Activated CD4-positive, alpha-beta T cell treated with anti-CD3 and anti-CD28 coated beads for 36 hours (primary cell): ENCODE measurements at regions of chr3 and their contacts with region 1.

Region 1: DNA sequence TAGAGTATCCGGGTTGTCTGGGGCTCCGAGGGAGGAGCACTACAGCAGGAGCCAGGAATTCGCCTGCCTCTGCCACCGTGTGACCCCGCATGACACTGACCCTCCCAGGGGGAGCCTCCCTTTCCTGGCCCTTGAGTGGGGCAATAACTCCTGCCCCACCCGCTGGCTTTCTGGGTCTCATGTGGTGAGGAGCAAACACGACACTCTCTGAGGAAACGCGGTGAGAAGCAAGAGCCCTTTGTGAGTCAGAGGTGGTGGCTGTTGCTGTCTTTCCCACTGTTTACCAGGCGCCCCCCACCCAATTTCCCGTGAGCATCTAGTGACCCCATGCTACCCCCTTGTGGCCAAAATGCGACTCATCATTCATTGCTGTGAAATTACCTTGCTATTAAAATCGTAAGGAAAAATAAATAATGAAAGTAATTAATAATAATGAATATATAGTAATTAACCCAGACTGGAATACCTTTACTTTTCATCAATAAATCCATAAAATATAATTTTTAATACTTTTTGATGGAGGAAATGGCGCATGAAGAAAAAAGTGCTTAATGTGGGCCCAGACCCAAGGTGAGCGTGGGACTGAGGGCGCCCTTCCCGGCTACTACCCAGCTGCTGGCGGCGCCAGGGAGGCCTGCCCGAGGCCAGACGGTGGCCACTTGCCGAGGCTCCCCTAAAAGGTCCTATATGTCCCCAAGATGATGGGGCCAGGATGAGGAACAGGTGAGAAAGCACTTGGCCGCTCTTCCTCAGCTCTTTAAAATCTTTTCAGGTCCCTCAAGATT is 29.3 kb downstream of the CCNL1 start:
- DNase-seq: peak; percentile 86
- ATAC-seq: peak; percentile 19
- H3K4me3 Mint-ChIP-seq: peak overlapping the region; percentile 57
- H3K27ac Mint-ChIP-seq: peak overlapping the region; percentile 95
- H3K4me1 Mint-ChIP-seq: peaks cover 76% of the 10 kb centered on the region
- H3K27me3 Mint-ChIP-seq: no peaks in the 10 kb centered on the region

Region 2: GRCh38 chr3:156535162-156535627 is 595.5 kb before region 1 on chr3:
- CTCF ChIA-PET with region 1: no interaction called
- POLR2A ChIA-PET with region 1: no interaction called
- intact Hi-C with region 1: no loop called
- DNase-seq: peak; percentile 58
- ATAC-seq: peak; percentile 85
- H3K4me3 Mint-ChIP-seq: no peak overlapping the region
- H3K27ac Mint-ChIP-seq: no peak overlapping the region
- H3K4me1 Mint-ChIP-seq: peaks cover 7% of the 10 kb centered on the region
- H3K27me3 Mint-ChIP-seq: no peaks in the 10 kb centered on the region

Region 3: DNA sequence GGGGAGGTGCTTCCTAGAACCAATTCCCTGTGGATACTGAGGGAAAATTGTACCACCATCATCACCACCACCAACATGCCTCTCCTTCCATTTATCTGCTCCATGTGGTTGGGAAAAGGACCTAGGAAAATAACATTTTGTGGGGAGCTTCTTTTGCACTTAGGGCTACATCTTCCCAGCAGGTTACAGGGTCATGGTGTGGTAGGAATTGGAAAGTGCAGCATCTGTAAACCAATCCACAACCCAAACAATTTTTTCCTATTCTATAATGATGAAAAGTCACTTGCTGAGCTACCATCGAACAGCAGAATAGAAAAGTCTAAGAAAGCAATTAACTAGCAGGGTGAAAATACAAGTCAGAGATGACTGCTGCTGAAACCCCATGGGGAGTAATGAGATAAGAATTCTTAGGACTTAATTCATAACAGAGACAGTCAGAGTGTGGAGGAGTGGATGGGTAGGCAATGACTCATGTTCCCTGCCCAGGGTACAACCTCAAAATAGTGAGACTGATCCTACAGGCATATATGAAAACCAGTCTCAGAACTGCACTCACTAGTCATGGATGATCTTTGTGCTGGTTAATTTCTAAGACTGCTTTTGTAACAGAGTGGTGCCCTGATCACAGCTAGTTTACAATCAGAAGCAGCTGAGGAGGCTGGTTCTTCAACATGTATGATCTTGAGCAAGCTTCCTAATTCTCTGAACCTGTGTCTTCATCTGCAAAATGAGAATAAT is 342.6 kb before region 1 on chr3:
- CTCF ChIA-PET with region 1: no interaction called
- POLR2A ChIA-PET with region 1: interaction called, 4 read pairs
- intact Hi-C with region 1: loop called in 1 of 2 experiments (anchors 1 kb)
- DNase-seq: peak; percentile 55
- ATAC-seq: peak; percentile 98
- H3K4me3 Mint-ChIP-seq: no peak overlapping the region
- H3K27ac Mint-ChIP-seq: peak overlapping the region; percentile 29
- H3K4me1 Mint-ChIP-seq: peaks cover 26% of the 10 kb centered on the region
- H3K27me3 Mint-ChIP-seq: no peaks in the 10 kb centered on the region

Region 4: GRCh38 chr3:156978481-156978961 is 152.1 kb before region 1 on chr3:
- CTCF ChIA-PET with region 1: interaction called, 3 read pairs
- POLR2A ChIA-PET with region 1: no interaction called
- intact Hi-C with region 1: loop called in 1 of 2 experiments (anchors 5 kb)
- DNase-seq: no peak
- ATAC-seq: no peak
- H3K4me3 Mint-ChIP-seq: no peak overlapping the region
- H3K27ac Mint-ChIP-seq: no peak overlapping the region
- H3K4me1 Mint-ChIP-seq: no peaks in the 10 kb centered on the region
- H3K27me3 Mint-ChIP-seq: no peaks in the 10 kb centered on the region

Region 5: DNA sequence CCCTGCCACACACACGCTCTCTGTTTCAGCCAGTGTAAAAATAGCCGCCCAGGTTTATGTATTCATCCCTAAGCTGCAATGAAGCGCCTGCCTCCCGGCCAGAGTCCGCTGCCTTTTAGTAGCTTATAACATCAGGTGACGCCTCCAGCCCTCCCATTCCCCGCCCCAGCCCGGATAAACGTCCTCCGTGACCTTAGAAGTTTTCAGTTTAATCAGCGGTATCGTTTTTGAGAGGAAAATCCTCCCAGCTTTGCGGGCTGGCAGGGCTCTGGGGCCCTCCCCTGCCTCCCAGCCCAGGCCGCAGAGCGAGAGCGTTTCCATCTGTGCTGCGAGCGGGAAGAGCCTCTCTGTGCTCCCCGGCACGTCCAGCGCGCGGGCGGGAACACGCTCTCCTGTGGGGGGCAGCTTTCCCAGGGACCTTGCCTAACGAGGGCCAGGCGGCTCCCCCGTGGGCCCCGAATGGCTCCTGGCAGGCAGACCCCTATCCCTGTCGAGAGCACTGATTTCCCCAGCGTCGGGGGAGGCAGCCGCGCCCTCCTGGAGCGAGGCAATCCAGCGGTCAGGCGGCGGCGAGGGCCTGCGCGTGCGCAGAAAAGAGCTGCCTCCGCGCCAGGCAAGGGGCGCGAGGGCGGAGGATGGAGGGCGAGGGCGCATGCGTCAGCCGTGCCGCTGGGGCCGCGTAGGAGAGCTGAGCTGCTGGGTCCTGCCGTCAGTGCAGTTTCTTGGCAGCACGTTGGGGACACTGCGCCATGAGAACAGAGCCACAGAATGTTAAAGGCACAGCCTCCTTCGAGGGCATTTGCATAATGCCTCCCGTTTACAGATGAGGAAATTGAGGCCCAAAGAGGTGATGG is 41.8 kb before region 1 on chr3:
- CTCF ChIA-PET with region 1: interaction called, 93 read pairs
- POLR2A ChIA-PET with region 1: interaction called, 35 read pairs
- intact Hi-C with region 1: loop called (anchors 1 kb)
- DNase-seq: peak; percentile 97
- ATAC-seq: peak; percentile 79
- H3K4me3 Mint-ChIP-seq: peak overlapping the region; percentile 72
- H3K27ac Mint-ChIP-seq: peak overlapping the region; percentile 97
- H3K4me1 Mint-ChIP-seq: peaks cover 71% of the 10 kb centered on the region
- H3K27me3 Mint-ChIP-seq: peaks cover 1% of the 10 kb centered on the region

Region 6: DNA sequence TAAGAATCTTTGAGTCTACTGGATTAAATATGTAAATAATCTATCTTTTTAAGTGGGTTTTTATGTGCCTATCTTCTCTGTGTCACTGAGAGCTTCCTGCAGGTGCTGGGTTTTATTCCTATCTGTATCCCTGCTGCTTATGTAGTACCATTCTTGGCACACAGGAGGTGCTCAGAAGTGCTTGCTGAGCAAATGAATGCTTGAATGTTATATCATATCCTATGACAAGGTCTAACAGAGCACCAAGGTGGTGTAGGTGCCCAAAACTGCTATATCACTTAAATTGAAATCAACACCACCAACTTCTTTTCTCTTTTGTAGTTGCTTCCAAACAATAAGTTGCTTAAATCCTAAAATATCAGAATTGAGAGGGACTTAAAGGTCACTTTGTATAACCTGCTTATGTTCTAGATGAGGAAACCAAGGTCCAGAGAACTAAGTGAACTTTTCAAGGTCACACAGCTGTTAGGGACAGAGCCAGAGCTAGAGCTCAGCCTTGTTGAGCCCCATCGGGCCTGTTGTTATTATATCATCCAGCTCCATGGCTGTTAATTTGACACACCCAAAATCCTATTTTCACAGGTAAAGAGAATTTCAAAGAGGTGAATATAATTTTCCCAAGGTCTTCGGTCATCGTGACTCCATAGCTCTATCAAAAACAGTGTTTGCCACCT is 16.7 kb before region 1 on chr3:
- CTCF ChIA-PET with region 1: interaction called, 25 read pairs
- POLR2A ChIA-PET with region 1: no interaction called
- intact Hi-C with region 1: no loop called
- DNase-seq: no peak
- ATAC-seq: peak; percentile 77
- H3K4me3 Mint-ChIP-seq: no peak overlapping the region
- H3K27ac Mint-ChIP-seq: no peak overlapping the region
- H3K4me1 Mint-ChIP-seq: no peaks in the 10 kb centered on the region
- H3K27me3 Mint-ChIP-seq: no peaks in the 10 kb centered on the region